ENCODE measurements at regions of chr4 and their contacts with region 1.

Region 1: GRCh38 chr4:151147000-151147399 is 47.6 kb downstream of the RPS3A start:
- DNase-seq: no peak
- ATAC-seq: no peak

Region 2: DNA sequence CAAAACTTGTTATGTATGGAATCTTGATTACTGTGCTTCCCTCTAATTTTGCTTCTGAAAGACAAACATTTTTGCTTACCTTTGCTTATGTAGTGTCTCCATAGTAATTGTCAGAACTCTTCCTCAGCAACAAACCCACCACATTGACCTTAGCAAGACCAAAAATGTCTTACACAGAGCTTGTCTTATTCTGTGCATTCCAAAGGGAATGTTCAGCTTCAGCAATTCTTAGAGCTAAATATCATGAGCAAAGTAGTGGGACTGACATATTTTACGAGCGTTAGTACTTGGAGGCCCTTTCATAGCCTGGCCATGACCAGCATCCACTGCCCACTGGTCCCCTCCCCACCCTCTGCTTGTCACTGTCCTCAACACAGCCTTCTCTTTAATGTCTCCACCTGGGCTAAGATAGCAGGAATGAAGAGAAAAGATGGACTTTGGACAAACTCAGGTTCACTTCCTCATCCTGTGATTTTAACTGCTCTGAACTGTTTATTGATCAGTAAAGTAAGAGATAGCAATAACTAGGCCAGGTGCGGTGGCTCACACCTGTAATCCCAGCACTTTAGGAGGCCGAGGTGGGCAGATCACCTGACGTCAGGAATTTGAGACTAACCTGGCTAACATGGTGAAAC is 193.9 kb after region 1 on chr4:
- intact Hi-C with region 1: loop called in 1 of 2 experiments (anchors 10 kb)
- DNase-seq: no peak
- ATAC-seq: no peak